Motor neuron (in vitro differentiated cells): ENCODE measurements at regions of chr16 and their contacts with region 1.

Region 1: GRCh38 chr16:24776501-24777220 is 47.2 kb downstream of the TNRC6A start:
- ATAC-seq: peak in 1 of 8 experiments; percentile 85
- H3K4me3 ChIP-seq: no peak overlapping the region
- H3K27ac ChIP-seq: no peak overlapping the region
- H3K4me1 ChIP-seq: no peaks in the 10 kb centered on the region

Region 2: GRCh38 chr16:24539291-24539849 is 237.3 kb before region 1 on chr16 and contains the start of gene RBBP6:
- in situ Hi-C with region 1: loop called in 1 of 9 experiments (anchors 25 kb)
- ATAC-seq: peak; percentile 86 to 94 (median 93)
- H3K4me3 ChIP-seq: peak within 1 kb of the TSS; percentile 65 to 89 (median 80)
- H3K27ac ChIP-seq: peak within 1 kb of the TSS; percentile 95 to 99
- H3K4me1 ChIP-seq: peaks cover 13 to 17% of the 10 kb centered on the region in 2 donors
- total RNA-seq, gene RBBP6: 24.0 to 68.9 (median 38.8) TPM

Region 3: DNA sequence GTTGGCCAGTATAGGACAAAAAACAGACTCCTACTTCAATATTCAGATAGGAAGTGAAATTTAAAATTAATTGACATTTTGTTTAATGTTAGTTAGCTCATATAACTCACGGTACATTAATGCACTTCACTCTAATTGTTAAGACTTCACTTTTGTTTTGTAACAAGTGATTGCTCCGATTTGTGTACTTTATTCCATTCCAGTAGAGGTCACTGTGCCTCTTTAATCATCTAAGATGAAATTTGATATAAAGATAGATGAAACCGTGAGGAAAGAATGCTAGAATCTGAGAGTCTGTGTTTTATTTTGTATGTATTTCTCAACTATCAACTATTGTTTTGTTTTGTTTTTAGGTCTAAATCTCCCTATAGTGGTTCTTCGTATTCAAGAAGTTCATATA is 208.3 kb before region 1 on chr16:
- in situ Hi-C with region 1: loop called in 2 of 9 experiments (anchors 25 kb)
- ATAC-seq: no peak
- H3K4me3 ChIP-seq: no peak overlapping the region
- H3K27ac ChIP-seq: no peak overlapping the region
- H3K4me1 ChIP-seq: no peaks in the 10 kb centered on the region

Region 4: DNA sequence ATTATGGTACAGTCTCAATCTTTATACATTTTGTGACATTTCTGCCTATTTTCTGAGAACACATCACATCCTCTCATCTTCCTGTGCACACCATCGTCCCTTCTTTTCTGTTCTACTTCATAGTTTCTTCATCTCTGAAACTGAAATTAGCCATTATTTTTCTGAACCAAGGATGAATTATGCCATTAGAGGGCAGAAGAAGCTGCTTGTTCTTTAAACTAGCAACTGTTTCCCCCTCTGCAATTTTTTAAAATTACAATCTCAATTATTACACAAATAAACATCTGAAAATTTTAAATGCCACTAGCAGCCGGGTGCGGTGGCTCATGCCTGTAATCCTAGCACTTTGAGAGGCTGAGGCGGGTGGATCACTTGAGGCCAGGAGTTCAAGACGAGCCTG is 196.0 kb before region 1 on chr16:
- in situ Hi-C with region 1: loop called in 1 of 9 experiments (anchors 25 kb)
- ATAC-seq: peak in 1 of 8 experiments; percentile 44
- H3K4me3 ChIP-seq: no peak overlapping the region
- H3K27ac ChIP-seq: no peak overlapping the region
- H3K4me1 ChIP-seq: no peaks in the 10 kb centered on the region

Region 5: DNA sequence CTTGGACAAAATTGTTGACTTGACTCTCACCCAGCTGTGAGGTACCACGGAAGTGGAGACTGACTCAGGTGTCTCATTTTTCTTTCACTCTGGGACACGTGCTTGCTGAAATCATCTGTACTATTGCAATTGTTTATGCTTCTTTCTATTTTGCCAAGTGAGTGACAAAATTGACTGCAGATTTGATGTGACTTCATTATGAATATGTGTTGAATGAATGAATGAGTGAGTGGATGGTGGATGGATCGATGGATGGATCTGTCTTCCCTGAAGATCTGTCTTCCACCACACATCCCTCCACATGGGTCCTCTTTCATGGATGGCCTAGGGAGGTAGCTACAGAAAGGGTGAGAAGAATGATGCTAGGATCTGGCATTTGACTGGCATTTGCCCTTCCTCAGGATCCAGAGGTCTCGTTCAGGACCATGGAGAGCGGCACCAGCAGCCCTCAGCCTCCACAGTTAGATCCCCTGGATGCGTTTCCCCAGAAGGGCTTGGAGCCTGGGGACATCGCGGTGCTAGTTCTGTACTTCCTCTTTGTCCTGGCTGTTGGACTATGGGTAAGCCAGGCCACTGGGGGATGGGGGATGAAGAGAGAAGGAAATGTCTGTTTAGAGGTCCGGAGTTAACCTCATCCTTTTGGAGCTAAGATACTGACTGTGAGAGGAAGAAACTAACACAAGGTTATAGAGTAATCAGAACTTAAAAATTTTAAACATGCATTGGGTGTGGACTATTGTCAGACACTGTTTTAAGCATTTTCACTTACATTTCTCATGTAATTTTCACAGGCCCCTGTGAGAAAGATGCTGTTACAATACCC is 81.8 kb after region 1 on chr16:
- in situ Hi-C with region 1: no loop called
- ATAC-seq: peak in 5 of 8 experiments; percentile 51 to 80 (median 55)
- H3K4me3 ChIP-seq: no peak overlapping the region
- H3K27ac ChIP-seq: no peak overlapping the region
- H3K4me1 ChIP-seq: no peaks in the 10 kb centered on the region

Region 6: GRCh38 chr16:25210758-25211157 is 434.1 kb after region 1 on chr16:
- in situ Hi-C with region 1: no loop called
- ATAC-seq: peak in 5 of 8 experiments; percentile 90 to 100 (median 96)
- H3K4me3 ChIP-seq: no peak overlapping the region
- H3K27ac ChIP-seq: no peak overlapping the region
- H3K4me1 ChIP-seq: no peaks in the 10 kb centered on the region